Natural killer cell (primary cell): ENCODE measurements at regions of chr7 and their contacts with region 1.

Region 1: DNA sequence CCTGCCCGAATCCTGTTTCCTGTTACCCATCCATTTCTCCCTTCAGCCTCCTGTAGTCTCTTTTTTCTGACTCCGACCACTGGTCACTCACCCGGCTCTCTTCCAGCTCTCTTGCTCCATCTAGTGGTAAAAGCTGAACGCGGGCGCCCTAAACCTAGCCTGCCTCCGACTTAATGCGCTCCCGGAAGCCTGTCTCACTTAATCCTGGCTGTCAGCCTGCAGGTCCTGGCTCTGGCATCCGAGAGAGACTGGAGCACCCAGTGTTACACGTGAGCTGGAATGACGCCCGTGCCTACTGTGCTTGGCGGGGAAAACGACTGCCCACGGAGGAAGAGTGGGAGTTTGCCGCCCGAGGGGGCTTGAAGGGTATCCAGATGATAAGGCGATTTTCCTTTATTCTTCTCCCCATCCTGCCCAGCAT is 10.3 kb downstream of the SUMF2 start:
- DNase-seq: peak; percentile 59 to 78
- ATAC-seq: peak; percentile 87 to 98 (median 95)
- H3K4me3 ChIP-seq: no peak overlapping the region
- H3K4me3 Mint-ChIP-seq: no peak overlapping the region
- H3K27ac ChIP-seq: no peak overlapping the region
- H3K27ac Mint-ChIP-seq: peak overlapping the region in 1 of 2 donors; percentile 7
- H3K4me1 ChIP-seq: peaks cover 5% of the 10 kb centered on the region
- H3K4me1 Mint-ChIP-seq: peaks cover 6 to 14% of the 10 kb centered on the region in 2 donors
- H3K27me3 ChIP-seq: no peaks in the 10 kb centered on the region
- H3K27me3 Mint-ChIP-seq: no peaks in the 10 kb centered on the region
- CTCF ChIP-seq: peak; percentile 89

Region 2: DNA sequence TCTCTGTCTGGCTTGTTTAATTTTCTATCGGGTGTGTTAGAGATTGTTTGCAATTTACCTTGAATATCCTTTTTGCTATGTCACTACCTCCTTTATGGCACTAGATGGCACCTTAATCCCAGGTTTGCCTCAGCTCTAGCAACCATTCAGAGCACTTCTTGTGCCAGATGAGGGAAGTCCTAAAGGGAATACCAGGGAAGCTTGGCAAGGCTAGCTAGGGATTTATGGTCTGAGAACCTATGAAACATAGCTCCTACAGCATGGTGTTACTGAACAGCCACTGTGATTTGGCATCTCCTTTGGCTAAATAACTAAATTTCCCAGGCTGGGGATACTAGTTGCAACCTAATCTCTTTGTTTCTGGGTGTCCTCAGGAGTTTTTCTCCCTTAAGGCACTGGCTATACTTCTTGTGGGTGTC is 433.1 kb before region 1 on chr7:
- intact Hi-C with region 1: loop called (anchors 1 kb)
- DNase-seq: peak in 1 of 2 donors; percentile 83
- ATAC-seq: peak; percentile 79 to 94 (median 91)
- H3K4me3 ChIP-seq: no peak overlapping the region
- H3K4me3 Mint-ChIP-seq: peak overlapping the region; percentile 58
- H3K27ac ChIP-seq: no peak overlapping the region
- H3K27ac Mint-ChIP-seq: peak overlapping the region; percentile 44 to 83
- H3K4me1 ChIP-seq: peaks cover 4% of the 10 kb centered on the region
- H3K4me1 Mint-ChIP-seq: peaks cover 11 to 12% of the 10 kb centered on the region in 2 donors
- H3K27me3 ChIP-seq: peaks cover 2% of the 10 kb centered on the region
- H3K27me3 Mint-ChIP-seq: peaks cover 6 to 33% of the 10 kb centered on the region in 2 donors
- CTCF ChIP-seq: peak; percentile 79

Region 3: GRCh38 chr7:56003749-56004148 is 70.6 kb before region 1 on chr7:
- intact Hi-C with region 1: loop called (anchors 1 kb)
- DNase-seq: no peak
- ATAC-seq: no peak
- H3K4me3 ChIP-seq: no peak overlapping the region
- H3K4me3 Mint-ChIP-seq: no peak overlapping the region
- H3K27ac ChIP-seq: no peak overlapping the region
- H3K27ac Mint-ChIP-seq: no peak overlapping the region
- H3K4me1 ChIP-seq: peaks cover 4% of the 10 kb centered on the region
- H3K4me1 Mint-ChIP-seq: no peaks in the 10 kb centered on the region
- H3K27me3 ChIP-seq: no peaks in the 10 kb centered on the region
- H3K27me3 Mint-ChIP-seq: no peaks in the 10 kb centered on the region
- CTCF ChIP-seq: no peak